ENCODE measurements at regions of chr16 and their contacts with region 1.

Region 1: GRCh38 chr16:53129281-53130158 is 74.7 kb downstream of the CHD9 start:
- DNase-seq: no peak
- CTCF ChIP-seq: no peak

Region 2: GRCh38 chr16:53061701-53062159 is 67.8 kb before region 1 on chr16:
- in situ Hi-C with region 1: loop called (anchors 10 kb)
- DNase-seq: peak; percentile 73
- CTCF ChIP-seq: no peak

Region 3: DNA sequence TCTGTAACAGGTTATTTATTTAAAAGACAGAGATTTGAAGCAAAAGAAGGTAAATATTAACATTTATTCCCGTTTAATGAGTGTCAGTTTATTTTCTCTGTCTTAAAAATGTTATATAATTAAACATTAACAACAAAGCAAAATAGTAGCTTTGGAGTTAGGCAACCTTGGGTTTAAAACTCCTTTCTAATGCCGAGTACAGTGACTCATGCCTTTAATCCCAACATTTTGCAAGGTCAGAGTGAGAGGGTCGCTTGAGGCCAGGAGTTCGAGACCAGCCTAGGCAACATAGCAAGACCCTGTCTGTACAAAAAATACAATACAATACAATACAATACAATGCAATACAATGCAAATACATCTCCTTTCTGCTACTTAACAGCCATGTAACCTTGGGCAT is 53.9 kb after region 1 on chr16:
- in situ Hi-C with region 1: no loop called
- DNase-seq: no peak
- CTCF ChIP-seq: no peak